GM12878 (cell line): ENCODE measurements at regions of chr2 and their contacts with region 1.

Region 1: GRCh38 chr2:111120253-111121027 is at the start of gene BCL2L11:
- DNase-seq: no peak
- ATAC-seq: peak; percentile 66
- H3K4me3 ChIP-seq: peak within 1 kb of the TSS; percentile 80
- H3K27ac ChIP-seq: no peak within 1 kb of the TSS
- H3K4me1 ChIP-seq: peaks cover 37% of the 10 kb centered on the region
- H3K27me3 ChIP-seq: peaks cover 7 to 29% of the 10 kb centered on the region in 2 experiments
- CTCF ChIP-seq: peak; percentile 11 to 31 (median 29); a peak in 1 of 6 replicates
- EP300 ChIP-seq: no peak
- POLR2A ChIP-seq: peak; percentile 88
- RAD21 ChIP-seq: no peak
- polyA plus RNA-seq, gene BCL2L11: 0.29 to 0.64 TPM

Region 2: GRCh38 chr2:110853507-110853906 is 266.9 kb before region 1 on chr2:
- CTCF ChIA-PET with region 1: interaction called, 4 read pairs
- POLR2A ChIA-PET with region 1: interaction called, 3 read pairs
- RAD21 ChIA-PET with region 1: no interaction called
- SMC1A ChIA-PET with region 1: interaction called, 4 read pairs
- in situ Hi-C with region 1: no loop called
- intact Hi-C with region 1: loop called (anchors 10 kb)
- DNase-seq: no peak
- ATAC-seq: peak; percentile 79
- H3K4me3 ChIP-seq: no peak overlapping the region
- H3K27ac ChIP-seq: no peak overlapping the region
- H3K4me1 ChIP-seq: peaks cover 7% of the 10 kb centered on the region; the same call in 1 of the 2 replicates
- H3K27me3 ChIP-seq: no peaks in the 10 kb centered on the region; a peak in 1 of 4 replicates
- CTCF ChIP-seq: peak; percentile 62 to 76 (median 63)
- EP300 ChIP-seq: no peak
- POLR2A ChIP-seq: no peak
- RAD21 ChIP-seq: peak; percentile 66

Region 3: GRCh38 chr2:111194835-111195621 is 74.6 kb after region 1 on chr2:
- CTCF ChIA-PET with region 1: interaction called, 7 read pairs
- POLR2A ChIA-PET with region 1: interaction called, 7 read pairs
- RAD21 ChIA-PET with region 1: interaction called, 41 read pairs
- SMC1A ChIA-PET with region 1: interaction called, 35 read pairs
- in situ Hi-C with region 1: no loop called
- intact Hi-C with region 1: loop called (anchors 1 kb)
- DNase-seq: peak; percentile 98
- ATAC-seq: peak; percentile 88
- H3K4me3 ChIP-seq: no peak overlapping the region
- H3K27ac ChIP-seq: peak overlapping the region; percentile 41; the same call in 1 of the 2 replicates
- H3K4me1 ChIP-seq: peaks cover 36% of the 10 kb centered on the region
- H3K27me3 ChIP-seq: no peaks in the 10 kb centered on the region
- CTCF ChIP-seq: peak; percentile 42 to 46 (median 45); a peak in 5 of 6 replicates
- EP300 ChIP-seq: peak; percentile 76 to 96
- POLR2A ChIP-seq: no peak
- RAD21 ChIP-seq: peak; percentile 47

Region 4: GRCh38 chr2:111219285-111219684 is 98.8 kb after region 1 on chr2:
- CTCF ChIA-PET with region 1: no interaction called
- POLR2A ChIA-PET with region 1: interaction called, 3 read pairs
- RAD21 ChIA-PET with region 1: interaction called, 17 read pairs
- SMC1A ChIA-PET with region 1: interaction called, 12 read pairs
- in situ Hi-C with region 1: no loop called
- intact Hi-C with region 1: no loop called
- DNase-seq: peak; percentile 98
- ATAC-seq: peak; percentile 96
- H3K4me3 ChIP-seq: peak overlapping the region; percentile 15; the same call in 1 of the 2 replicates
- H3K27ac ChIP-seq: peak overlapping the region; percentile 74
- H3K4me1 ChIP-seq: peaks cover 17% of the 10 kb centered on the region
- H3K27me3 ChIP-seq: no peaks in the 10 kb centered on the region
- CTCF ChIP-seq: no peak
- EP300 ChIP-seq: peak; percentile 99 to 100
- POLR2A ChIP-seq: no peak
- RAD21 ChIP-seq: 0 out of 2 replicates have a peak, but pooled peaks have one; percentile 0

Region 5: GRCh38 chr2:111705711-111706336 is 585.4 kb after region 1 on chr2:
- CTCF ChIA-PET with region 1: interaction called, 4 read pairs
- POLR2A ChIA-PET with region 1: no interaction called
- RAD21 ChIA-PET with region 1: no interaction called
- SMC1A ChIA-PET with region 1: no interaction called
- in situ Hi-C with region 1: loop called (anchors 10 kb)
- intact Hi-C with region 1: no loop called
- DNase-seq: peak; percentile 78
- ATAC-seq: peak; percentile 91
- H3K4me3 ChIP-seq: no peak overlapping the region
- H3K27ac ChIP-seq: no peak overlapping the region
- H3K4me1 ChIP-seq: peaks cover 20% of the 10 kb centered on the region
- H3K27me3 ChIP-seq: no peaks in the 10 kb centered on the region
- CTCF ChIP-seq: no peak
- EP300 ChIP-seq: peak; percentile 77 to 94; a peak in 3 of 4 replicates
- POLR2A ChIP-seq: no peak
- RAD21 ChIP-seq: no peak